Activated T-helper 2 cell treated with anti-CD3 and anti-CD28 coated beads, Interferon-gamma antibody, Interleukin-2, Interleukin-4, amounts not matched to agents 10 μg/mL and 5 μg/mL and 100 μg/mL, durations not matched to agents 14 hours and 24 hours and 36 hours (primary cell): ENCODE measurements at regions of chr17 and their contacts with region 1.

Region 1: GRCh38 chr17:40355123-40355803 is 9.3 kb downstream of the GJD3 start:
- DNase-seq: peak; percentile 62
- H3K4me3 Mint-ChIP-seq: no peak overlapping the region
- H3K27ac Mint-ChIP-seq: no peak overlapping the region
- H3K4me1 Mint-ChIP-seq: peaks cover 17% of the 10 kb centered on the region
- H3K27me3 Mint-ChIP-seq: no peaks in the 10 kb centered on the region

Region 2: GRCh38 chr17:40303009-40303657 is 52.1 kb before region 1 on chr17:
- intact Hi-C with region 1: loop called (anchors 2 kb)
- DNase-seq: no peak
- H3K4me3 Mint-ChIP-seq: no peak overlapping the region
- H3K27ac Mint-ChIP-seq: no peak overlapping the region
- H3K4me1 Mint-ChIP-seq: peaks cover 13% of the 10 kb centered on the region
- H3K27me3 Mint-ChIP-seq: no peaks in the 10 kb centered on the region